HEK293 (cell line): ENCODE measurements at regions of chr2 and their contacts with region 1.

Region 1: GRCh38 chr2:96174251-96175144 is 29.3 kb upstream of the DUSP2 start:
- H3K4me3 ChIP-seq: no peak overlapping the region
- H3K27ac ChIP-seq: no peak overlapping the region
- H3K4me1 ChIP-seq: no peaks in the 10 kb centered on the region
- CTCF ChIP-seq: peak; percentile 65

Region 2: DNA sequence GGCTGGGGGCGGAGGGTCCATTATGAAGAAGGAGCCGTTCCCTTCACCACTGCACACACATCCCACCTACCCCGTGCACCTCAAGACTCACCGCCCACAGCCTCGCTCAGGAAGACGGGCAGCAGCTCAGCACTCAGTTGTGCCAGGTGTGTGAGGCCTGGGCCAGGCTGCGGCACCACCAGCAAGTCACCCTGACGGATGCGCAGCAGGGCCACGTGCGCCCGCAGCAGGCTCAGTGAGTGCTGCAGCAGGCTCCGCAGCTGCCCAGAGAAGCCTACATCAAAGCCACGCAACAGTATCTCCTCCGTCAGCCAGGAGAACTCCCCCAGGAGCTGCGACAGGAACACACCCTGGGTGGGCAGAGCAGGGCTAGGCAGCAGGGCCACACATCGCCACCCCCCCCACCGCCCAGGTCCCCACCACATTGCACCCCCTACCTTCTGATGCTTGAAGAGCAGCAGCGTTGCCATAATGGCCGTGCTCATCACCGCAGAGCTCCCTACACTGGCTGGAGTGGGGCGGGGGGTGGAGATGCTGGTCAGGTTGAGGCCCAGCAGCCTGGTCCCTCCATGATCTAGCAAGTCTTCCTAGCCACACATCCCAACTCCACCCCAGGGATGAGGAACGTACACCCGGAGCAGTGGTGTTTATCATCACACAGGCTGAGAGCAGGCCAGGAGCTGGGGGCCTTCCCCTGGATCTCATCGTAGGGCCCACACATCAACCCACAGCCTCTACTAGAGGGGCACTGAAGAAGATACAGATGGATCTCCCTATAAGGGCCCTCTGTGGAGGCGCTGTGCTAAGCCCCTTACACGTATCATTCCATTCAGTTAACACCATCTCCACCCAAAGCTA is 149.9 kb before region 1 on chr2:
- CTCF ChIA-PET with region 1: interaction called, 38 read pairs
- POLR2A ChIA-PET with region 1: no interaction called
- H3K4me3 ChIP-seq: no peak overlapping the region
- H3K27ac ChIP-seq: no peak overlapping the region
- H3K4me1 ChIP-seq: no peaks in the 10 kb centered on the region
- CTCF ChIP-seq: no peak

Region 3: DNA sequence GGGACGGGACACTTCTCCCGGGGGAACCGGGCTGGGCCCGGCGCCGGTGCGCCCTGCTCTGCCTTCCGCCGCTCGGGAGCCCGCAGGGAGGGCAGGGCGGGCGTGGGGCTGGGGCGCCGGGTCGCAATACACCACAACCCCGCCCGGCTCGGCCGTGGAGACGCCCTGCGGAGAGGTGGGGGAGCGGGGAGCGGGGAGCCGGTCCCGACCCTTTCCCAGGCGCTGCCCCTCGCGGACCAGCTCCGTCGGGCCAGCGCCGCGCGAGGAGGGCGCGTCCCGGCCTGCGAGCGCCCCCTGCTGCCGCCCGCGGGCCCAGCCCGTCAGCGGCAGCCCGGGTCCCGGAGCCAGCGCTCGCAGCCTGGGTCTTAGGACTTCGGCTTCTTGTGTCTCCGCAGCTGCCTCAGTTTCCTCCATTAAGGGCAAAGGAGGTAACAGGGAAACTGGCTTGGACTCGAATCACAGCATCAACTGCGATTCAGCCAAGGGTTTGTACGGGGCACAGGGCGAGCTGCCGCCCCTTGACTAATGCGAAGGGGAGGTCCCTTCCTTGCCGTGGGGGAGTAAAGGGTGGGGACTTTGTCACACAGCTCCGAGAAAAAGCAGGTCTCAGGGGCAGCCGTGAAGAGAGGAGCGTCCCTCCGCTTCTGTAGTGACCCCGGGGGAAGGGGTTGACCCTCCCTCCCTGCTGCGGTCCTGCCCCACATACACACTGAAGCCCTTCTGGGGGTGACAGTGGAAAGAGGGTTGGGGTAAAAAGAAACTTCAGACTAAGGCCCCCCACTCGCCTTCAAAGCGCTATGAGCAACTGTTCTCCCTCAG is 57.4 kb before region 1 on chr2:
- CTCF ChIA-PET with region 1: interaction called, 14 read pairs
- POLR2A ChIA-PET with region 1: no interaction called
- H3K4me3 ChIP-seq: peak overlapping the region; percentile 36
- H3K27ac ChIP-seq: no peak overlapping the region; the same call in 1 of the 2 replicates
- H3K4me1 ChIP-seq: no peaks in the 10 kb centered on the region
- CTCF ChIP-seq: no peak

Region 4: DNA sequence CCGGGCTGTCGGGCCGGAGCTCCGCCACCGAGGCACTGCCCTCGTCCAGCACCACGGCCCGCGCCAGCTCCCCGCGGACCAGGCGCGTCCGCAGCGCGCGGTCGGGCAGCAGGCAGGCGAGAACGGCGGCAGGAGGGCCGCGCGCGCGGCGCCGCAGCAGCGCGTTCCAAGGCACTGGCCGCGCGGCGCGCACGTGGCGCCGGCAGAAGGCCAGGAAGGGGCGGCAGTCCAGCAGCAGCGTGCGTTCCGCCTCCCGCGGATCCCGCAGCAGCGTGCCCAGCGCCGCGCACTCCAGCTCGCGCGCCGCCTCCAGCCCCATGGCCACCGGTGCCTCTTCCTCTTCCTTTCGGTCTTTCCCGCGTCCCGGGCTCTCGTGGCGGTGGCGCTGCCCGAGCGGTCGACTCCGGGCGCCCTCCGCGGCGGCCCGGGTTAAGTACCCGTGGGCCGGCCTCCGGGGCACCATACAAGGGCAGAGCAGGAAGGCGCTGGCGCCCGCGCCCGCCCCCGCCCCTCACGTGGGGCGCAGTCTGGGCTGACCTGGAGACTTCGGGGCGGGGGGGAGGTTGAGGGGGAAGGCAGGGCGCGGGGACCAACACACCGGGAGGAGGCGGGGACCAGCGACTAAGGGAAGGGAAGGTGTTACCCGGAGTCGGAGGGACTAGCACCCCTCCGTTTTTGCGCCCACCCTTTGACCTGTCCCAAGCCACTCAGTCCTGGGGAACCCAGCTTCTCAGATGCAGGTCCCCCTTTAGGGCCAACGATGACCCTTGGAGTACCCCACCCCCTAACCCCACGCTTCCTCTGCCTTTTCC is 29.3 kb before region 1 on chr2 and contains the start of gene DUSP2:
- CTCF ChIA-PET with region 1: interaction called, 142 read pairs
- POLR2A ChIA-PET with region 1: no interaction called
- H3K4me3 ChIP-seq: peak within 1 kb of the TSS; percentile 21
- H3K27ac ChIP-seq: no peak within 1 kb of the TSS; the same call in 1 of the 2 replicates
- H3K4me1 ChIP-seq: peaks cover 9% of the 10 kb centered on the region; the same call in 1 of the 2 replicates
- CTCF ChIP-seq: no peak

Region 5: DNA sequence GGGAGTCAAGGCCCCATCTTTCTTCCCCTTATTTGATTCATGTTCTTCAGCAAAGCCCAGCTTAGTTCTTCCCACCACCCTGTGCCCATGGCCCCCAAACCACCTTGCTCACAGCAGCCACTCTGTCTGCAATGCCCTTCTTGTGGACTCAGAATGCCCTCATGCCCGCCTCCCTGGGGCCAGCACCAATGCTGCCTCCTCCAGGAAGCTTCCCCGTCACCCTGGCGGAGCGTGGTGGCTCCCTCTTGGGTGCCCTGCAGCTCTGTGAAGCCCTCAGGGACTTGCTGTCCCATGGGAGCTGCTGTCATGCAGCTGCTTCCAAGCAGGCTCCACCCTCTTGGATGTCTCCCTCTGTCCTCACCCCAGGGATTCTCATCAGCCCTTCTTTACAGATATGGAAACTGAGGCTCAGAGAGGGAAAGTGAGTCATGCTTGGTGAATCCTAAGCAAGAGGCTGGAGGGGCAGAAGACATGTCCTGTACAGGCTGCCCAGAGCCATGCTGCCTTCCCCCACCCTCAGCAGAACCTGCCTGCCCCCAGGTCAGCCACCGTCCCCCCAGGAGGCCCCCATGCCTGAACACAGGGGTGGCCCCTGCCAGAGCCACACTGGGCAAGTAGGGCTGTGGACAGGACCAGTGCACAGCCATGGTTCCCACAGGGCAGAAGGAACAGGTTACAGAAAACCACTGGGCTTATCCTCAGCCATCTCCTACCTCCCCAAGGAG is 17.4 kb before region 1 on chr2:
- CTCF ChIA-PET with region 1: interaction called, 15 read pairs
- POLR2A ChIA-PET with region 1: no interaction called
- H3K4me3 ChIP-seq: no peak overlapping the region
- H3K27ac ChIP-seq: no peak overlapping the region
- H3K4me1 ChIP-seq: no peaks in the 10 kb centered on the region
- CTCF ChIP-seq: no peak

Region 6: GRCh38 chr2:96188821-96189526 is 14.5 kb after region 1 on chr2:
- CTCF ChIA-PET with region 1: interaction called, 18 read pairs
- POLR2A ChIA-PET with region 1: no interaction called
- H3K4me3 ChIP-seq: no peak overlapping the region
- H3K27ac ChIP-seq: no peak overlapping the region
- H3K4me1 ChIP-seq: no peaks in the 10 kb centered on the region
- CTCF ChIP-seq: no peak

Region 7: GRCh38 chr2:96195410-96196066 is 21.0 kb after region 1 on chr2:
- CTCF ChIA-PET with region 1: interaction called, 18 read pairs
- POLR2A ChIA-PET with region 1: no interaction called
- H3K4me3 ChIP-seq: no peak overlapping the region
- H3K27ac ChIP-seq: no peak overlapping the region
- H3K4me1 ChIP-seq: peaks cover 10% of the 10 kb centered on the region
- CTCF ChIP-seq: no peak

Region 8: DNA sequence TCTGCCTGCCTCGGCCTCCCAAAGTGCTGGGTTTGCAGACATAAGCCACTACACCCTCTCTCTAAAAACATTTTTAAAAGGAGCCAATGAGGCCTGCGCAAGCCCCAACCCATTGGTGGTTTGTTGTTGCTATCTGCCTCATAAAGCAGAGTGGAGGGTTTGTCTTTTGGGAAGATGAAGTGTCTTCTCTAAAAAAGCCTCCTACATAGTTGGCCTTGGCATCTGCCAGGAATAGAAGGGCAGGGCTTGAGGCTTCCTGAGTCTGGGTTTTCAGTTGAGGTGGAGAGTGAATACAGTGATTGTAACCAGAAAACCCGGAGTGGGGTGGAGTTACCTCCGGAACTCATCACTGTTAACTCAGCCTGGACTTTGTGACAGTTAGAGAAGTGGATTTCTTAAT is 40.1 kb after region 1 on chr2:
- CTCF ChIA-PET with region 1: no interaction called
- POLR2A ChIA-PET with region 1: no interaction called
- H3K4me3 ChIP-seq: no peak overlapping the region
- H3K27ac ChIP-seq: no peak overlapping the region
- H3K4me1 ChIP-seq: no peaks in the 10 kb centered on the region
- CTCF ChIP-seq: no peak